Breast epithelium (tissue), 4 donors: ENCODE measurements at regions of chr17 and their contacts with region 1.

Region 1: GRCh38 chr17:71203953-71204352 is 916.9 kb upstream of the SOX9 start:
- DNase-seq: no peak
- H3K4me3 ChIP-seq: no peak overlapping the region
- H3K27ac ChIP-seq: no peak overlapping the region
- H3K4me1 ChIP-seq: no peaks in the 10 kb centered on the region
- H3K27me3 ChIP-seq: no peaks in the 10 kb centered on the region
- CTCF ChIP-seq: no peak
- POLR2A ChIP-seq: no peak

Region 2: DNA sequence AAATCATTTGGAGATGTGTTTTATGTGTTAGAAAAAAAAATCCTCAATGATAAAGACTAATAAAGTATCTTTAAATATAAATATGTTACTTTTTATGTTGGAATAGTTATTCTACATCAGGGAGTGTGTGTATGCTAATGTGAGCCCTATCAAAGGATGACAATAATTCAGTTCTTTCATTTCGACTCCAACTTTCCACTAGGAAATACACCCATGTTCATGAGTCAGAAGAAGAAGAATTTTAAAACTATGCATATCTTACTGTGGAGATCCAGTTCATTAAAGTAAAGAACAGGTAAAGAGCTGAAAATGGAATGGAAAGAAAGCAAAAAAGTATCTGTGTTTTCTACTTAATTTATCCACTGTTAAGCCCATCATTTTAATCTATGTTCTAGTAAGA is 634.8 kb before region 1 on chr17:
- intact Hi-C with region 1: loop called (anchors 5 kb)
- DNase-seq: no peak
- H3K4me3 ChIP-seq: no peak overlapping the region
- H3K27ac ChIP-seq: no peak overlapping the region
- H3K4me1 ChIP-seq: no peaks in the 10 kb centered on the region
- H3K27me3 ChIP-seq: no peaks in the 10 kb centered on the region
- CTCF ChIP-seq: no peak
- POLR2A ChIP-seq: no peak

Region 3: GRCh38 chr17:71726341-71726740 is 522.4 kb after region 1 on chr17:
- intact Hi-C with region 1: no loop called
- DNase-seq: no peak
- H3K4me3 ChIP-seq: peak overlapping the region in 1 of 3 donors; percentile 20
- H3K27ac ChIP-seq: no peak overlapping the region
- H3K4me1 ChIP-seq: no peaks in the 10 kb centered on the region
- H3K27me3 ChIP-seq: no peaks in the 10 kb centered on the region
- CTCF ChIP-seq: no peak
- POLR2A ChIP-seq: no peak